ENCODE measurements at regions of chr10 and their contacts with region 1.

Region 1: GRCh38 chr10:77173615-77174461 is 463.8 kb downstream of the KCNMA1 start:
- DNase-seq: peak; percentile 44 to 84 (median 71)
- ATAC-seq: peak; percentile 42
- H3K4me3 ChIP-seq: no peak overlapping the region
- H3K4me3 Mint-ChIP-seq: no peak overlapping the region
- H3K27ac ChIP-seq: no peak overlapping the region
- H3K27ac Mint-ChIP-seq: no peak overlapping the region
- H3K4me1 ChIP-seq: no peaks in the 10 kb centered on the region
- H3K4me1 Mint-ChIP-seq: no peaks in the 10 kb centered on the region
- H3K27me3 ChIP-seq: no peaks in the 10 kb centered on the region
- H3K27me3 Mint-ChIP-seq: peaks cover 10% of the 10 kb centered on the region
- CTCF ChIP-seq: peak; percentile 90

Region 2: DNA sequence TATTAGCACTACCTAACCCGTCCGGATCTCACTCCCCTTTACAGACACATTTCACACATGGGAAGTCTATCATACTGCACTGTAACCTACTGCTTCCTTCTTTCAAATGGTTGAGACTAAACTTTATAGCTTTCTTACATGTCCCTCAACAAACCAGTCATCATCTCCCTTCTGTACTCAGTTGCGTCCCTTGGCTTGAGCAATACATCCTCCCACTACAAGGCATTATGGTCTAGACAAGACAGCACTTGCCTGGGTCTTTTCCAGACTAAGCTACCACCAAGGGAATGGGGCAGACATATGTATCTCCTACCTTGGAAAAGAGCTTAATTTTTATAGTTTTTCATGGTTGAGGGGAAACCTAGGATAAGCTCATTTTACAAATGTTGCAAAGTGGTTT is 111.5 kb before region 1 on chr10:
- CTCF ChIA-PET with region 1: no interaction called
- POLR2A ChIA-PET with region 1: no interaction called
- intact Hi-C with region 1: no loop called
- DNase-seq: no peak
- ATAC-seq: no peak
- H3K4me3 ChIP-seq: no peak overlapping the region
- H3K4me3 Mint-ChIP-seq: no peak overlapping the region
- H3K27ac ChIP-seq: no peak overlapping the region
- H3K27ac Mint-ChIP-seq: no peak overlapping the region
- H3K4me1 ChIP-seq: no peaks in the 10 kb centered on the region
- H3K4me1 Mint-ChIP-seq: no peaks in the 10 kb centered on the region
- H3K27me3 ChIP-seq: no peaks in the 10 kb centered on the region
- H3K27me3 Mint-ChIP-seq: no peaks in the 10 kb centered on the region
- CTCF ChIP-seq: no peak

Region 3: DNA sequence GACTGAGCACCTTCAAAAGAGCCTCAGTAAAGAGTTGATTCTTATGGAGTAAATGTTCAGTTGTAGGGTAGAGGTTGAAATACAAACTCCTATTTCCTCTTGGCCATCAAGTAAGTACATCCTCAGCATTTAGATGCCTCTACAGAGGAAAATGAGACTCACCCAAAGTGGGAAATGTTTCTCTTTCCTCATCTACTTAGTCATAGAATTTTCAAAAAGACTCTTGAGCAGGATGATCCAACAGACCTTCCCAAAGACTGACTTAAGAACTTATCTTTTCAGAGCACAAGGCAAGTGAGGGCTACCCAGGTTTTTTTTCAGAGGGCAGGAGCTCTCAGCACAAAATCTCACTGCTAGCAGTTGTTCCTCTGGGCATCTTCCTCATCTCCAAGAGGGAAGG is 14.7 kb after region 1 on chr10:
- CTCF ChIA-PET with region 1: interaction called, 11 read pairs
- POLR2A ChIA-PET with region 1: no interaction called
- intact Hi-C with region 1: no loop called
- DNase-seq: no peak
- ATAC-seq: no peak
- H3K4me3 ChIP-seq: no peak overlapping the region
- H3K4me3 Mint-ChIP-seq: no peak overlapping the region
- H3K27ac ChIP-seq: no peak overlapping the region
- H3K27ac Mint-ChIP-seq: no peak overlapping the region
- H3K4me1 ChIP-seq: no peaks in the 10 kb centered on the region
- H3K4me1 Mint-ChIP-seq: no peaks in the 10 kb centered on the region
- H3K27me3 ChIP-seq: no peaks in the 10 kb centered on the region
- H3K27me3 Mint-ChIP-seq: peaks cover 10% of the 10 kb centered on the region
- CTCF ChIP-seq: no peak

Region 4: GRCh38 chr10:77636282-77636966 is 462.6 kb after region 1 on chr10:
- CTCF ChIA-PET with region 1: interaction called, 394 read pairs
- POLR2A ChIA-PET with region 1: no interaction called
- intact Hi-C with region 1: loop called (anchors 1 kb)
- DNase-seq: no peak
- ATAC-seq: no peak
- H3K4me3 ChIP-seq: no peak overlapping the region
- H3K4me3 Mint-ChIP-seq: peak overlapping the region; percentile 45
- H3K27ac ChIP-seq: no peak overlapping the region
- H3K27ac Mint-ChIP-seq: no peak overlapping the region
- H3K4me1 ChIP-seq: no peaks in the 10 kb centered on the region
- H3K4me1 Mint-ChIP-seq: peaks cover 11% of the 10 kb centered on the region
- H3K27me3 ChIP-seq: peaks cover 2 to 14% of the 10 kb centered on the region in 2 experiments
- H3K27me3 Mint-ChIP-seq: peaks cover 61% of the 10 kb centered on the region
- CTCF ChIP-seq: no peak

Region 5: GRCh38 chr10:77710759-77711682 is 537.2 kb after region 1 on chr10:
- CTCF ChIA-PET with region 1: interaction called, 54 read pairs
- POLR2A ChIA-PET with region 1: no interaction called
- intact Hi-C with region 1: loop called (anchors 1 to 2 kb)
- DNase-seq: peak; percentile 43 to 82 (median 69)
- ATAC-seq: peak; percentile 97
- H3K4me3 ChIP-seq: peak overlapping the region in 1 of 2 experiments; percentile 40
- H3K4me3 Mint-ChIP-seq: peak overlapping the region; percentile 72
- H3K27ac ChIP-seq: no peak overlapping the region
- H3K27ac Mint-ChIP-seq: no peak overlapping the region
- H3K4me1 ChIP-seq: no peaks in the 10 kb centered on the region
- H3K4me1 Mint-ChIP-seq: peaks cover 6% of the 10 kb centered on the region
- H3K27me3 ChIP-seq: peaks cover 1 to 3% of the 10 kb centered on the region in 2 experiments
- H3K27me3 Mint-ChIP-seq: peaks cover 22% of the 10 kb centered on the region
- CTCF ChIP-seq: peak; percentile 93

Region 6: GRCh38 chr10:77774940-77775391 is 601.1 kb after region 1 on chr10:
- CTCF ChIA-PET with region 1: no interaction called
- POLR2A ChIA-PET with region 1: no interaction called
- intact Hi-C with region 1: no loop called
- DNase-seq: no peak
- ATAC-seq: no peak
- H3K4me3 ChIP-seq: no peak overlapping the region
- H3K4me3 Mint-ChIP-seq: no peak overlapping the region
- H3K27ac ChIP-seq: no peak overlapping the region
- H3K27ac Mint-ChIP-seq: no peak overlapping the region
- H3K4me1 ChIP-seq: no peaks in the 10 kb centered on the region
- H3K4me1 Mint-ChIP-seq: no peaks in the 10 kb centered on the region
- H3K27me3 ChIP-seq: no peaks in the 10 kb centered on the region
- H3K27me3 Mint-ChIP-seq: peaks cover 3% of the 10 kb centered on the region
- CTCF ChIP-seq: no peak

Measured in CD8-positive, alpha-beta T cell (primary cell).